CD8-positive, alpha-beta T cell (primary cell): ENCODE measurements at regions of chr12 and their contacts with region 1.

Region 1: GRCh38 chr12:53791735-53792326 is 40.1 kb upstream of the CISTR start:
- DNase-seq: peak in 8 of 9 experiments; percentile 1 to 53 (median 33)
- ATAC-seq: no peak
- H3K4me3 ChIP-seq: no peak overlapping the region
- H3K4me3 Mint-ChIP-seq: no peak overlapping the region
- H3K27ac ChIP-seq: no peak overlapping the region
- H3K27ac Mint-ChIP-seq: no peak overlapping the region
- H3K4me1 ChIP-seq: no peaks in the 10 kb centered on the region
- H3K4me1 Mint-ChIP-seq: no peaks in the 10 kb centered on the region
- H3K27me3 ChIP-seq: peaks cover 0 to 4% of the 10 kb centered on the region in 2 experiments
- H3K27me3 Mint-ChIP-seq: peaks cover 17% of the 10 kb centered on the region
- CTCF ChIP-seq: peak; percentile 54

Region 2: DNA sequence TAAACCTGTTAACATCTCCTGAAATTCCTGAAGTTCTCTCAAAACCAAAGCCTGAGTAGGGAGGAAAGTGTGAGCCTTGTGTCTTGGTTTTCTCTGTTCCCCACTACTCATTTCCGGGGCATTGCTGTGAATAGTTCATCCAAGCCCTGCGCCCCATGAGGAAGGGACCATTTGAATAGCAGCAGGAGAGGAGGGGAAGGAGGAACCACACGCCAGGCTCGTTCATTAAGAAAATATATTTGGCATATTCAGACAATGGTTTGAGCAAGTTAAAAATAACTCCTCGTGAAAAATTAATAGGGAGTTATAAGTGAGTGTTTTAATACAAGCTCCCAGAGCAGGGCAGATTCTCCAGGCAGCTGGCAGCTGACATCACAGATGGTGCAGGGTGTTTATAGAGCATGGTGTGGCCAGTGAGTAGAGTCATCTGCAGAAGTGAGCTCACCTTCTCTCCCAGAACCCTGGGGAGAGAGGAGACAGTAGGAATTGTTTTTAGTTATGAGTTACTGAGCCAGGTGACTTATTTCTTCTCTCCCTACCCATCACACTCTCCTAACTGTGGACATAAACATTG is 10.5 kb before region 1 on chr12:
- CTCF ChIA-PET with region 1: interaction called, 17 read pairs
- POLR2A ChIA-PET with region 1: no interaction called
- intact Hi-C with region 1: no loop called
- DNase-seq: no peak
- ATAC-seq: no peak
- H3K4me3 ChIP-seq: no peak overlapping the region
- H3K4me3 Mint-ChIP-seq: no peak overlapping the region
- H3K27ac ChIP-seq: no peak overlapping the region
- H3K27ac Mint-ChIP-seq: no peak overlapping the region
- H3K4me1 ChIP-seq: no peaks in the 10 kb centered on the region
- H3K4me1 Mint-ChIP-seq: no peaks in the 10 kb centered on the region
- H3K27me3 ChIP-seq: no peaks in the 10 kb centered on the region
- H3K27me3 Mint-ChIP-seq: peaks cover 54% of the 10 kb centered on the region
- CTCF ChIP-seq: no peak

Region 3: GRCh38 chr12:53984901-53985709 is 193.3 kb after region 1 on chr12 and contains the start of gene HOXC10:
- CTCF ChIA-PET with region 1: no interaction called
- POLR2A ChIA-PET with region 1: no interaction called
- intact Hi-C with region 1: loop called in 1 of 2 experiments (anchors 5 kb)
- DNase-seq: peak; percentile 26 to 86 (median 72)
- ATAC-seq: peak; percentile 66
- H3K4me3 ChIP-seq: no peak within 1 kb of the TSS
- H3K4me3 Mint-ChIP-seq: peak within 1 kb of the TSS; percentile 49
- H3K27ac ChIP-seq: no peak within 1 kb of the TSS
- H3K27ac Mint-ChIP-seq: no peak within 1 kb of the TSS
- H3K4me1 ChIP-seq: peaks cover 27% of the 10 kb centered on the region
- H3K4me1 Mint-ChIP-seq: peaks cover 36% of the 10 kb centered on the region
- H3K27me3 ChIP-seq: peaks cover 75 to 85% of the 10 kb centered on the region in 2 experiments
- H3K27me3 Mint-ChIP-seq: peaks cover 90% of the 10 kb centered on the region
- CTCF ChIP-seq: peak; percentile 44
- total RNA-seq, gene HOXC10: not detected